Activated CD4-positive, alpha-beta memory T cell treated with anti-CD3 and anti-CD28 coated beads for 36 hours (primary cell): ENCODE measurements at regions of chr12 and their contacts with region 1.

Region 1: GRCh38 chr12:15276088-15276698 is 46.1 kb upstream of the PTPRO start:
- DNase-seq: no peak
- H3K4me3 Mint-ChIP-seq: no peak overlapping the region
- H3K27ac Mint-ChIP-seq: no peak overlapping the region
- H3K4me1 Mint-ChIP-seq: peaks cover 10% of the 10 kb centered on the region
- H3K27me3 Mint-ChIP-seq: peaks cover 2% of the 10 kb centered on the region

Region 2: DNA sequence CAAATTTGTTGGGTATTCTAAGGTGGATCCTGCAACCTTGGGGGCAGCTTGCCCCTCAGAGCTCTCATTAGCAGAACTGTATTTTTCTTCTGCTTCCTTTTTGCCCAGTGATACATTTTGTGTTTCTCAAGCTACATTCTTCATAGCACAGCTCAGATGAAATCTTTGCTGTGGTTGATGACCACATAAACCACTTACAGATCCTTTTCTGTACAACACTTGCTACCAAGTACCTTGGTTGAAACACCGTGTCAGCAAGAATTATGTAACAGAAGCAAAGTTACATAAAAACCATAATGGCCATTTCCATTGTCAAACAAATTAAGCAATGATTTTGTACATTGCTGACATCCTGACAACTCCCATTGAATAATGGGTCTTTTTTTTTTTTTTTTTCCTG is 698.8 kb before region 1 on chr12:
- CTCF ChIA-PET with region 1: no interaction called
- POLR2A ChIA-PET with region 1: no interaction called
- intact Hi-C with region 1: no loop called
- DNase-seq: no peak
- H3K4me3 Mint-ChIP-seq: no peak overlapping the region
- H3K27ac Mint-ChIP-seq: no peak overlapping the region
- H3K4me1 Mint-ChIP-seq: peaks cover 17% of the 10 kb centered on the region
- H3K27me3 Mint-ChIP-seq: no peaks in the 10 kb centered on the region

Region 3: GRCh38 chr12:15289192-15289591 is 13.0 kb after region 1 on chr12:
- CTCF ChIA-PET with region 1: interaction called, 11 read pairs
- POLR2A ChIA-PET with region 1: no interaction called
- intact Hi-C with region 1: no loop called
- DNase-seq: no peak
- H3K4me3 Mint-ChIP-seq: no peak overlapping the region
- H3K27ac Mint-ChIP-seq: no peak overlapping the region
- H3K4me1 Mint-ChIP-seq: peaks cover 4% of the 10 kb centered on the region
- H3K27me3 Mint-ChIP-seq: peaks cover 5% of the 10 kb centered on the region

Region 4: GRCh38 chr12:15364221-15365160 is 88.3 kb after region 1 on chr12:
- CTCF ChIA-PET with region 1: no interaction called
- POLR2A ChIA-PET with region 1: no interaction called
- intact Hi-C with region 1: no loop called
- DNase-seq: no peak
- H3K4me3 Mint-ChIP-seq: no peak overlapping the region
- H3K27ac Mint-ChIP-seq: no peak overlapping the region
- H3K4me1 Mint-ChIP-seq: no peaks in the 10 kb centered on the region
- H3K27me3 Mint-ChIP-seq: peaks cover 4% of the 10 kb centered on the region

Region 5: DNA sequence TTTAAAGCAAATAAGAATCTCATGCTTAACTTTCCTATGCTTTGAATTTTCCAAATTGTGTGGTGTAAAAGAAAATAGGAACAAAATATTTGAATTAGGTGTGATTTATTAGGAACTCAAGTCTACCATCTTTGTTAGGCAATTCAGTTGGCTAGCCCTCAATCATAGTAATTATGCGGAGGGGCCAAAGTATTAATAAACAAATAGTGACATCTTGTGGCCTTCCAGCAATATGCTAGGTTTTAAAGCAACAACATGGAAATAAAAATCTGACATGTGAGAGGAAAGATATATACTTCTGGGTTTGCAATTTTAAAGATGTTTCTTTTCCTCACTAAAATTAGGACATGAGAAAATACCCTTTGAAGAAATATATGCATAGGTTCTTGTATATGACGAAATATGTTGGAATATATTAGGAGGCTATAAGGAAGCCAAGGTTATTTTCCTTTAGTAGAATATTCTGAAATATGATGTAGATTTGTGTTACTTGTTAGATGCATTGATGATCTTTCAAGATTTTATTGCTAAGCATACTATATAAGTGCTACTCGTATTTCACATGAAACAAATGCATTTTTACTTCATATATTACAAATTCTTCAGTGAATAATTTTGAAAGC is 246.5 kb after region 1 on chr12:
- CTCF ChIA-PET with region 1: interaction called, 9 read pairs
- POLR2A ChIA-PET with region 1: no interaction called
- intact Hi-C with region 1: loop called (anchors 1 kb)
- DNase-seq: no peak
- H3K4me3 Mint-ChIP-seq: no peak overlapping the region
- H3K27ac Mint-ChIP-seq: no peak overlapping the region
- H3K4me1 Mint-ChIP-seq: no peaks in the 10 kb centered on the region
- H3K27me3 Mint-ChIP-seq: peaks cover 29% of the 10 kb centered on the region

Region 6: DNA sequence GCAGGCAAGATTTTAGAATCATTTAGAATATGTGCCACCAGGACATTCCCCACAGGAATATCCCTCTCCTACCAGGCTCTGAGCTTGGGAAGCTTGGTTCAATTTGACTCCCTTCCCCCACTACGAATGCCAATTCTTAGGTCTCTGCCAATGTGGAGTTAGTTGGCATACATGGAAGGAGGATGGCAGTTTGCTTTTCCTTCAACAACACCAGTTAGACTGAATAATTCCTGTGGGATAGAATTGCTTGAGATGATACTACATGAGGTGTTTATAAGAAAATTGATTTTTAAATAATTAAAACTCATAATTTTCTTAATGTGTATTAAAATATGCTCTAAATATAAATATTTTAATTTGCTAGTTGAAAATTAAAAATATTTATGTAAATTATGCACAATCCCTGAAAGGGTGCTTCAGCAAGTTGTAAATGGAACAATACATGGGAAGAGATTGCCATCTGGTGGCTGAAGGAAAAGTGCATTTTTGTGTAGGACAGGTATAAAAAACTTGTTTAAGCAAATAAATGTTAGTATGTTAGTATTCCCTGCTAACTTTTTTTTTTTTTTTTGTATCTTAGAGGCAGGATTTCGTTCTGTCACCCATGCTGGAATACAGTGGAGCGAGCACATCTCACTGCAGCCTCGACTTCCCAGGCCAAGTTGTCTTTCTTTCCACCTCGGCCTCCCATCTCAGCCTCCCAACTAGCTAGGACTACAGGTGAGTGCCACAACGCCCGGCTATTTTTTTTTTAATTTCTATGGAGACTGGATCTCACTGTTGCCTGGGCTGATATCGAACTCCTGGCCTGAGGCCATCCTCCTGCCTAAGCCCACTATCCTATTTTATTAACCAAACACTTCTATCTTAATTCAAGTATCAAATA is 580.1 kb after region 1 on chr12:
- CTCF ChIA-PET with region 1: interaction called, 5 read pairs
- POLR2A ChIA-PET with region 1: no interaction called
- intact Hi-C with region 1: loop called (anchors 10 kb)
- DNase-seq: peak; percentile 22
- H3K4me3 Mint-ChIP-seq: no peak overlapping the region
- H3K27ac Mint-ChIP-seq: no peak overlapping the region
- H3K4me1 Mint-ChIP-seq: no peaks in the 10 kb centered on the region
- H3K27me3 Mint-ChIP-seq: peaks cover 5% of the 10 kb centered on the region